Colonic mucosa (tissue), 4 donors: ENCODE measurements at regions of chr14 and their contacts with region 1.

Region 1: GRCh38 chr14:102694530-102695166 is 82.6 kb upstream of the TRAF3 start:
- DNase-seq: peak; percentile 85
- H3K4me3 ChIP-seq: no peak overlapping the region
- H3K27ac ChIP-seq: no peak overlapping the region
- H3K4me1 ChIP-seq: no peaks in the 10 kb centered on the region
- H3K27me3 ChIP-seq: no peaks in the 10 kb centered on the region
- CTCF ChIP-seq: peak; percentile 63

Region 2: DNA sequence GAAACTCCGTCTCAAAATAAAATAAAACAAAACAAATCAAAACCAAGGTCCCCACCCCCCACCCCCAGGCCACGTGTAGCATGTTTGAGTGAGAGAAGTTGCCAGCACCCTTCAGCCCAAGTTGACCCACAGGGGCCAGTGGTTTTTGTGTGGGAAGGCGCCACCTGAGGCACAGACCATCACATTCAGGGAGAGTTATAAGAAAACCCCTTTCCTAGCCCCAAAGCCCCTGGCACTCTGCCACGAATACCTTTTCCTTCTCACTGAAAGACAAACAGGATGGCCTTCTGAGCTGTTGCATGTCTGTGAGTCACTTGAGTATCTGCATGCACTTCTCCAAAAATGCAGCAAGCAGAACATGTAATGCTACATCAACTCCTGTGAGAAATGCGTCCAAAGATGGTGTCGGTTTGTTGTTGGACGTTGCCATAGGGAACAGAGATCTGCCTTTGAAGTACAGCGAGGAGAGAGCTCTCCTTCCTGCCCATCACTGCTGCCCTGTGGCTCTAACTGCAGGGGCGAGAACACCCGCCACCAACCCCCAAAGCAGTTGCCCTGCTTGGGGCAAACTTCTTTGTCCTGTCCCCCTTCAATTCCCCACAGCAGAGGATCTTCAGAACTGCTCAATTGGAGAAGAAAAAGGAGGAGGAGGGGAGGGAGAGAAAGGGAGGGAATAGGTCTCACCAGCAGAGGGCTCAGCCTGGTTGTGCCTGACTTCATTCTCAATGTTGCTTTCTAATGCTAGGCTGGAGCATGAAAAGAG is 79.9 kb after region 1 on chr14:
- intact Hi-C with region 1: loop called (anchors 5 kb)
- DNase-seq: peak; percentile 72
- H3K4me3 ChIP-seq: no peak overlapping the region
- H3K27ac ChIP-seq: no peak overlapping the region
- H3K4me1 ChIP-seq: no peaks in the 10 kb centered on the region
- H3K27me3 ChIP-seq: no peaks in the 10 kb centered on the region
- CTCF ChIP-seq: peak; percentile 72

Region 3: DNA sequence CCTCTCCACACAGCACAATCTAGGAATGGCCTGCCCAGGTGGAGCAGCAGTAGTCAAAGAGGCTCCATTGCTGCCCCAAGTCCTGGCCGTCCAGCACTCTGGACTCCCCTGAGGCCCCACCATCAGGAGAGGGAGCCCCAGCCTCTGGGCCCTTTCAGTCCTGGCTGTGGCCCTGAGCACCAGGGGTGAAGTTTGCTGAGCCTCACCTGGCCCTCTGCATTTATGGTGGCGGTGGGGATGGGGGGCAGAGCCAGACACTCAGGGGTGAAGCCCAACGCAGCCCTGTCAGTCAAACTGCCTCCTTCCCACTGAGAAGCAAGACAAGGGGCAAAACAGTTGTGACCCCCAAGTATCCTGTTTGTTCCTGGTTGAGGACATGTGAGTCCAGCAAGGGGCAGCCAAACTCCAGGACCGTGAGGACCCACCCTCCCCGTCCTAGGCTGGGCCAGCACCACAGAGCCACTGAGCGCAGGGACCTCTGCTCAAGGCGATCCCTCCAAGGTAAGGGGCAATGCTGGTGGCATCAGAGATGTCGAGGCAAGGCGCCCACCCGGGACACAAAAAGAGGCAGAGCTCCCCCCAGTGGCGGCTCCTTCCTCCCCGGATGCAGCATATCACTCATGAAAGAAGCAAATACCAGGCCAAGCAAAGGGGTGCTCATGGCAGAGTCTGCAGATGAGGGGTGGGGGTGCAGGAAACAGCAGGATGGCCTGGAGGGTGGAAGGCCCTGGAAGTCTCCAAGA is 223.0 kb after region 1 on chr14:
- intact Hi-C with region 1: loop called (anchors 5 kb)
- DNase-seq: peak; percentile 77
- H3K4me3 ChIP-seq: no peak overlapping the region
- H3K27ac ChIP-seq: no peak overlapping the region
- H3K4me1 ChIP-seq: no peaks in the 10 kb centered on the region
- H3K27me3 ChIP-seq: no peaks in the 10 kb centered on the region
- CTCF ChIP-seq: peak; percentile 56